Esophagus muscularis mucosa (tissue), 4 donors: ENCODE measurements at regions of chr1 and their contacts with region 1.

Region 1: GRCh38 chr1:160219062-160219929 is 14.1 kb downstream of the PEA15 start:
- DNase-seq: no peak
- H3K4me3 ChIP-seq: no peak overlapping the region
- H3K27ac ChIP-seq: peak overlapping the region; percentile 60 to 79 (median 76)
- H3K4me1 ChIP-seq: peaks cover 35 to 54% (median 45%) of the 10 kb centered on the region in 4 donors
- H3K27me3 ChIP-seq: no peaks in the 10 kb centered on the region
- CTCF ChIP-seq: peak; percentile 64 to 76 (median 74)
- EP300 ChIP-seq: no peak
- POLR2A ChIP-seq: no peak

Region 2: DNA sequence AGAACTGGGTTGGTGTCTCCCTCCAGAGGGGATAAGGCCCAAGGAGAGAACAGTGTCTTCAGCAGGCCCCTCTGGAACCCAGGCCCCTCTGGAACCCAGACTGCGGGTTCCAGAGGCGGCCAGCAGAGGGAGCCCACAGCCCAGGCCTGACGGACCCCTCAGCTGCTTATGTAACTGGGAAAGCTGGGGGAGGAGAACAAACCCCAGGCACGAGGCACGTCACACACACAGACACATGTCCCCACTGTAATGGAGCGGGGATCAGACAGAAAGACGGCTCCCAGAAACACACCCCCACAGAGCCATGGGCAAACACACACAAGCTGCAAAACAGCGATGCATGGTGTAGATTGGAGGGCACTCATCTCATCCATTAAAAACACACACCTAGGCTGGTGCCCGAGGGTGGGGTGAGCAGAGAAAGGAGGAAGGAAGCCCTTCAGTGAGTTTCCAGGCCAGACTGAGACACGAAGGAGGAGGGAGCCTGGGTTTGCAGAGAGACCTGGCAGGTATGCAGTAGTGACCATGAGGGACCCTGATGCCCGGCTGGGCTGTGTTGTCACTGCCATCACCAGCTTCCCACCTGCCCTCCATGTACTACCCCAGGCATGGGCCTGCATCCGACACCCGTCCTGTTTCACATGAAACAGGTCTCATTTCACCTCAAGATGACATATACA is 118.1 kb before region 1 on chr1:
- intact Hi-C with region 1: loop called (anchors 2 kb)
- DNase-seq: no peak
- H3K4me3 ChIP-seq: peak overlapping the region in 1 of 4 donors; percentile 9
- H3K27ac ChIP-seq: peak overlapping the region; percentile 94 to 98 (median 96)
- H3K4me1 ChIP-seq: peaks cover 52 to 76% (median 71%) of the 10 kb centered on the region in 4 donors
- H3K27me3 ChIP-seq: no peaks in the 10 kb centered on the region
- CTCF ChIP-seq: peak in 2 of 3 experiments; percentile 97 to 100
- EP300 ChIP-seq: no peak
- POLR2A ChIP-seq: no peak